ENCODE measurements at regions of chr2 and their contacts with region 1.

Region 1: GRCh38 chr2:209495855-209496585 is 72.2 kb downstream of the MAP2 start:
- DNase-seq: no peak
- H3K4me3 ChIP-seq: peak overlapping the region; percentile 1 to 5
- H3K27ac ChIP-seq: peak overlapping the region; percentile 70 to 77
- H3K4me1 ChIP-seq: peaks cover 0 to 25% (median 10%) of the 10 kb centered on the region in 4 donors
- H3K27me3 ChIP-seq: no peaks in the 10 kb centered on the region
- CTCF ChIP-seq: no peak

Region 2: GRCh38 chr2:209549589-209549988 is 53.6 kb after region 1 on chr2:
- intact Hi-C with region 1: loop called (anchors 10 kb)
- DNase-seq: no peak
- H3K4me3 ChIP-seq: no peak overlapping the region
- H3K27ac ChIP-seq: no peak overlapping the region
- H3K4me1 ChIP-seq: no peaks in the 10 kb centered on the region
- H3K27me3 ChIP-seq: no peaks in the 10 kb centered on the region
- CTCF ChIP-seq: no peak

Region 3: DNA sequence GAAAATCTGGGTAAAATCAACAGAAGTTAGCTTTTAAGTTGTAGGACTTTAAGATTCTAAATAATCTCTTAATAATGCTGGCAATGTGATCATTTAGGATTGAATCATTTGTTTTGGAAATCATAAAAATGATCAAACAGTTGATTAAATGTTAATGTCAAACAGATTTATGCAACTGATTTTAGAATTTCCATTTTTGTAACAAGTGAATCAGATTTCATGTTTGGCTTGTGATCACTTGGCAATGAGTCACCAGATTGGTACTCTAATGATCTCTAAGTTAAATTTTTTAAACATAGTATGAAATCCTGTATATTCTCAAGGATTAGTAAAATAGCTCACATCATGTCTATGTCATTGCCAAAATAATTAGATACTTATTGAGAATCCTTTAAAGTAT is 225.5 kb after region 1 on chr2:
- intact Hi-C with region 1: no loop called
- DNase-seq: no peak
- H3K4me3 ChIP-seq: no peak overlapping the region
- H3K27ac ChIP-seq: no peak overlapping the region
- H3K4me1 ChIP-seq: peaks cover 0 to 8% (median 0%) of the 10 kb centered on the region in 4 donors
- H3K27me3 ChIP-seq: no peaks in the 10 kb centered on the region
- CTCF ChIP-seq: no peak